Heart left ventricle (tissue), 16 donors: ENCODE measurements at regions of chr16 and their contacts with region 1.

Region 1: DNA sequence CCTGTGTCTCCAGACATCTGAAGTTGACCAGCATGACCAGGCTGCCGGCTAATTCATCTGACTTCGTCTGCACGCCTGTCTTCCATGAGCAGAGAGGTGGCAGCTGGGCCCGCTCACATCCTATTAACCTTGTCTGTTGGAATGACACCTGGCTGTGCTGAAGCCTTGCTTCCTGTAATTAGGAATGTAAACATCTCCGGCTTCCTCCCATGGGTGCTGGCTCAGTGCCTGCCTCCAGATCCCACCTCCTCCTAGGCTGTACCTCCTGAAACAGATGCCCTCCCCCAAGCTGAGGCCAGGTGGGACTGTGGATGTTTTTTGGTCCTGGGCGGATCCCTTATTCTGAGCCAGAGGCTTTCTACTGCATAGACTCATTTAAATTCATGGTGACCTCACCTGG is 296.3 kb downstream of the HS3ST4 start:
- DNase-seq: no peak
- ATAC-seq: no peak
- H3K4me3 ChIP-seq: no peak overlapping the region
- H3K27ac ChIP-seq: no peak overlapping the region
- H3K4me1 ChIP-seq: no peaks in the 10 kb centered on the region
- H3K27me3 ChIP-seq: no peaks in the 10 kb centered on the region
- CTCF ChIP-seq: no peak
- POLR2A ChIP-seq: no peak

Region 2: DNA sequence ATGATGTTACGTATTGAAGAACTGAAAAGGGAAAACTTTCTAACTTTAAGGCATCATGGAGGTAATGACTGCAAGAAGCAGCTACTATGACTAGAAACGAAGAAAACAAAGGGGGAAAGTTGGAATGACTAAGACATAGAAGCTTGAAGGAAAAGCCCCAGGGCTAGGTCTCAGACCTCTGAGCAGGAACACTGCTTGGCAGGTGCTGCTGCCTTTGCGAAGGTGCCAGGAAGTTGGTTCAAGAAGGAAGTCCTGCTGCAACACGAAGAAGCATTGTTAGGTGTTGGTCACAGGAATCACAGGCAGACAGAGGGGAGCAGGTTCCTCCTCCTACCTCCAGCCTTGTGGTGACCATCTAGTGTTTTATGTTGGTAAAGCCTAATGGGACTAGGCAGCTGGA is 344.5 kb before region 1 on chr16:
- intact Hi-C with region 1: no loop called
- DNase-seq: no peak
- ATAC-seq: no peak
- H3K4me3 ChIP-seq: no peak overlapping the region
- H3K27ac ChIP-seq: no peak overlapping the region
- H3K4me1 ChIP-seq: no peaks in the 10 kb centered on the region
- H3K27me3 ChIP-seq: peaks cover 0 to 4% (median 0%) of the 10 kb centered on the region in 9 donors
- CTCF ChIP-seq: no peak
- POLR2A ChIP-seq: no peak

Region 3: DNA sequence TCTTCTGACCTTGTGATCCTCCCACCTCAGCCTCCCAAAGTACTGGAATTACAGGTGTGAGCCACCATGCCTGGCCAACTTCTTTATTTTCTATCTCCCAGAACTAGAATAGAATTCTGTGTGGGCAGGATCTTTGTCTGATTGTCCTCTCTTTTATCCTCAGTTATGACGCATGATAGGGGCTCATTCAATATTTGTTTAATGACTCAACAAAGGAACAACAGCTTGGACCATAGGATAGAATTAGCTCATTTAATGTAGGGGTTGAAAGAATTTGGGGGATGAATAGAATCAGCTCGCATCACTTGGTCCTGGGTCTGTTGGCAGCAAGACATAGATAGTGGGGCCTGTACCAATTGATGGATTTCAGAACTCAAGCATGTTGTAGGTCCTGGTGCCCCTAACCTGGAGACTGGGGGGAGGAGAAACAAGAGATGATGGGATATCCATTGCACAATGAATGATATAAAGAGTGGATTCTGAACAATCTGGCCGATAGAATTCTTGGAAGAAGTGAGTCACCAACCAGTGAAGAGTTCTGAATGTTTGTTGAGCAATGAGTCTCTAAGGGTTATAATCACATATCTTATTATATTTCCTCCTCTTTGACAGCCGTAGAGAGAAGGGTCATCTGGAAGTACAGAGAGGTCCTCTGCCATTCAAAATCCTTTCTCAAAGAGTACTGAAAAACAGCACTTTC is 46.1 kb before region 1 on chr16:
- intact Hi-C with region 1: loop called in 1 of 10 experiments (anchors 5 kb)
- DNase-seq: no peak
- ATAC-seq: no peak
- H3K4me3 ChIP-seq: no peak overlapping the region
- H3K27ac ChIP-seq: no peak overlapping the region
- H3K4me1 ChIP-seq: no peaks in the 10 kb centered on the region
- H3K27me3 ChIP-seq: no peaks in the 10 kb centered on the region
- CTCF ChIP-seq: no peak
- POLR2A ChIP-seq: no peak

Region 4: DNA sequence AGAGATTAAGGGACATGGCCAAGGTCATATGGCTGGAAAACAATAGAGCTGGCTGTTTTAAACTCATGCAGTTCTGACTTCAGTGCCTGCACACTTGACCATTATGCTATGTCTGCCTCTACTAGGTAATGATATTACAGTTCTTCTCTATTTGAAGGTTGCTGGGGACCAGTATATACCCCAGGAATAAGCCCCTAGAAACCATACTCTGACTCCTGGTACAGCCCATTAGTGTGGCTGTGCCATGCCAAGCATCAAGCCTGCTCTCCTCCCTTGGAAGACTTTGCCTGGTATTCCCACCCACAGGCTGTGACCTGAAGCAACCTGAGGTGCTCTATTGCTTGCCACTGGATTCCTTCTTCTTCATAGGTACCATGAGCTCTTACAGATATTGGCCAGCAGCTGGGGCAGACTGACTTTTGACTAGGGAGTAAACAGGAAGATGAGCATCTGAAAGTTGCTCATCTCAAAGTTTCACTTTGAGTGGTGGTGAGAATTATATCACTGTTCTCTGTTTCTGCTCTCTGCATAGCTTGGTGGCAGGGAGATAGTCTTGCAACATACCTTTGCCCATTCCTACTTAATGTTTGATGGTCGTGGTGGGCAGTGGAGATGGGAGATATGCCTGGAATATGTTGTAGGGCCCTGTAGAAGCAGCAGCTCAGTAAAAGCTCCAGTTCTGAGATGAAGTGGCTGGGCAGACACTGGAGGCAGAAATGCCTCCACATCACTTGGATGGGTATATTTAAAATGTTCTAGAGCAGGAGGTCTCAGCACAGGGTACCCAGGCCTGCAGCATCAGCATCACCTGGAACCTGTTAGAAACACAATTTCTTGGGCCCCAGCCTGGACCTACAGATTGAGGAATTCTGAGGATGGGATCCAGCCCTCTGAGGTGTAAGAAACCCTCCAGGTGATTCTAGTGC is 21.6 kb before region 1 on chr16:
- intact Hi-C with region 1: no loop called
- DNase-seq: no peak
- ATAC-seq: no peak
- H3K4me3 ChIP-seq: no peak overlapping the region
- H3K27ac ChIP-seq: no peak overlapping the region
- H3K4me1 ChIP-seq: no peaks in the 10 kb centered on the region
- H3K27me3 ChIP-seq: no peaks in the 10 kb centered on the region
- CTCF ChIP-seq: no peak
- POLR2A ChIP-seq: no peak